ENCODE measurements at regions of chrX and their contacts with region 1.

Region 1: GRCh38 chrX:54044126-54044876 is at the start of gene PHF8:
- DNase-seq: peak; percentile 96
- ATAC-seq: peak; percentile 80
- H3K4me3 ChIP-seq: peak within 1 kb of the TSS; percentile 68 to 86 (median 75)
- H3K4me3 Mint-ChIP-seq: peak within 1 kb of the TSS; percentile 97
- H3K27ac ChIP-seq: peak within 1 kb of the TSS; percentile 84 to 87
- H3K27ac Mint-ChIP-seq: peak within 1 kb of the TSS; percentile 95
- H3K4me1 ChIP-seq: peaks cover 9 to 13% of the 10 kb centered on the region in 2 donors
- H3K4me1 Mint-ChIP-seq: peaks cover 17% of the 10 kb centered on the region
- H3K27me3 ChIP-seq: no peaks in the 10 kb centered on the region
- H3K27me3 Mint-ChIP-seq: no peaks in the 10 kb centered on the region
- CTCF ChIP-seq: no peak
- total RNA-seq, gene PHF8: 73.2 and 79.3 TPM in 2 replicates

Region 2: GRCh38 chrX:53093748-53094583 is 950.3 kb before region 1 on chrX and contains the start of gene KANTR:
- CTCF ChIA-PET with region 1: no interaction called
- POLR2A ChIA-PET with region 1: no interaction called
- intact Hi-C with region 1: loop called (anchors 10 kb)
- DNase-seq: peak; percentile 88
- ATAC-seq: peak; percentile 82
- H3K4me3 ChIP-seq: peak within 1 kb of the TSS; percentile 51 to 72 (median 68)
- H3K4me3 Mint-ChIP-seq: peak within 1 kb of the TSS; percentile 91
- H3K27ac ChIP-seq: peak within 1 kb of the TSS; percentile 49 to 59
- H3K27ac Mint-ChIP-seq: peak within 1 kb of the TSS; percentile 91
- H3K4me1 ChIP-seq: peaks cover 6 to 15% of the 10 kb centered on the region in 2 donors
- H3K4me1 Mint-ChIP-seq: peaks cover 16% of the 10 kb centered on the region
- H3K27me3 ChIP-seq: no peaks in the 10 kb centered on the region
- H3K27me3 Mint-ChIP-seq: no peaks in the 10 kb centered on the region
- CTCF ChIP-seq: no peak
- total RNA-seq, gene KANTR: 26.8 and 32.6 TPM in 2 replicates

Region 3: GRCh38 chrX:53683556-53684414 is 360.5 kb before region 1 on chrX:
- CTCF ChIA-PET with region 1: interaction called, 7 read pairs
- POLR2A ChIA-PET with region 1: interaction called, 11 read pairs
- intact Hi-C with region 1: no loop called
- DNase-seq: peak; percentile 96
- ATAC-seq: peak; percentile 70
- H3K4me3 ChIP-seq: peak overlapping the region; percentile 65 to 77 (median 69)
- H3K4me3 Mint-ChIP-seq: peak overlapping the region; percentile 94
- H3K27ac ChIP-seq: peak overlapping the region; percentile 95 to 98
- H3K27ac Mint-ChIP-seq: peak overlapping the region; percentile 99
- H3K4me1 ChIP-seq: peaks cover 21 to 26% of the 10 kb centered on the region in 2 donors
- H3K4me1 Mint-ChIP-seq: peaks cover 39% of the 10 kb centered on the region
- H3K27me3 ChIP-seq: no peaks in the 10 kb centered on the region
- H3K27me3 Mint-ChIP-seq: no peaks in the 10 kb centered on the region
- CTCF ChIP-seq: no peak

Region 4: DNA sequence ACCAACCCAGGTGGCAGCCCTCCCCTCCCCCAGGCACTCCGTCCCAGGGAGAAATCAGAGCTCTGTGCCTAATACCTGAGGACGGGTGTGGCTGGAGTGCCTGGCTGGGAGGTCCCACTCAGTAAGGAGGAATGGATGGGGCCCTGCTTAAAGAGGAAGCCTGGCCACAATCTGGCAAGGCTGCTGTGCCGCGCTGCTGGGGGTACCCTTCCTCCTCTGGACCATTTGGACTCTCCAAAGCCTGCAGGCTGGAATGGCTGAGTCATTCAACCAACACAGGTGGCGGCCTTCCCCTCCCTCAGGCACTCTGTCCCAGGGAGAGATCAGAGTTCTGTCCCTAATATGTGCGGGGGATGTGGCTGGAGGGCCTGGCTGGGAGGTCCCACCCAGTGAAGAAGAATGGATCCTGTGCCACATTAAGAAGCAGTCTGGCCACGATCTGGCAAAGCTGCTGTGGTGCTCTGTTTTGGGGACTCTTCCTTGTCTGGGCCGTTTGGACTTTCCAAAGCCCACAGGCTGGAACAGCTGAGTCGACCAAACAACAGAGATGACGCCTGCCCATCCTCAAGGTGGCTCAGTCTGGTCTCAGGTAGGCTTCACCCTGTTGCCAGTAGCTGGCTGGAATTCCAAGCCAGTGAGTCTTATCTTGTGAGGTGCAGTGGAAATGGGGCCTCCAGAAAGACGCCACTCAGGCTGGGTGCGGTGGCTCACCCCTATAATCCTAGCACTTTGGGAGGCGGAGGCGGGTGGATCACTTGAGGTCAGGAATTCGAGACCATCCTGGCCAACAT is 230.5 kb before region 1 on chrX:
- CTCF ChIA-PET with region 1: no interaction called
- POLR2A ChIA-PET with region 1: no interaction called
- intact Hi-C with region 1: no loop called
- DNase-seq: no peak
- ATAC-seq: no peak
- H3K4me3 ChIP-seq: no peak overlapping the region
- H3K4me3 Mint-ChIP-seq: no peak overlapping the region
- H3K27ac ChIP-seq: no peak overlapping the region
- H3K27ac Mint-ChIP-seq: no peak overlapping the region
- H3K4me1 ChIP-seq: no peaks in the 10 kb centered on the region
- H3K4me1 Mint-ChIP-seq: no peaks in the 10 kb centered on the region
- H3K27me3 ChIP-seq: no peaks in the 10 kb centered on the region
- H3K27me3 Mint-ChIP-seq: no peaks in the 10 kb centered on the region
- CTCF ChIP-seq: no peak

Region 5: DNA sequence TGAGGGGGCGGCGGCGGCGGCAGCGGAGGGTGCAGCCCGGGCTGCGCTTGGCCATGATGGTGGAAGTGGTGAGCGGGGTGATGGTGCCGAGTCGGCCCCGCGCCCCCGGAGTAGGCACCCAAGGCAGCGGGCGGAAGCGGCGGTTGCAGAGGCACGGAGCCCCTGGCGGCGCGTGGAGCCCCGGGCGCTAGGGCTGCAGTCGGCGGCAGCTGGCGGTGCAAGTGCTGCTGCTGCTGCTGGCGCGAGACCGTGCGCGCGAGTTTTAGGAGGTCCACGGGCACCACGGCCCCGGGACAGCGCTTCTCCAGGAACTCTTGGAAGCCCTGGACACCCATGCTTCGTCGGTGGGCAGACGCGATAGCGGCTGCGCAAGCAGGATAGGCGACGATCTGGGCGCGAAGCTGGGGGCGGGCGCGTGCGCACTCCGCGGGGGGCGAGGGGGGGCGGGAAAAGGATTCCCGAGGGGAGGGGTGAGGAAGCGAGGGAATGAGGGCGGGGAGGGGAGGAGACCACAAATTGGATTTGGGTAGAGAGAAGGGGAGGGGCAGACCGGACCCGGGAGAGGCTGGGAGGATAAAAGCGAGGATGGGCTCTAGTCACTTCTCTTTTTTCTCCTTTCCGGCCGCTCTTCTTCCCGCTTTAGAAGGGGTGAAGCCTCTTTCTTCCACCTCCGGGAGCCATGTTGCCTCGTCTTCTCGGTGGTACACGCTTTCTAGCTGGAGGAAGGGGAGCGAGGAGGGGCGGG is 138.7 kb after region 1 on chrX and contains the start of gene FAM120C:
- CTCF ChIA-PET with region 1: no interaction called
- POLR2A ChIA-PET with region 1: interaction called, 15 read pairs
- intact Hi-C with region 1: loop called (anchors 1 kb)
- DNase-seq: peak; percentile 78
- ATAC-seq: peak; percentile 76
- H3K4me3 ChIP-seq: peak within 1 kb of the TSS in 4 of 5 experiments; percentile 61 to 74 (median 66)
- H3K4me3 Mint-ChIP-seq: peak within 1 kb of the TSS; percentile 89
- H3K27ac ChIP-seq: peak within 1 kb of the TSS; percentile 48 to 63
- H3K27ac Mint-ChIP-seq: peak within 1 kb of the TSS; percentile 88
- H3K4me1 ChIP-seq: peaks cover 20 to 24% of the 10 kb centered on the region in 2 donors
- H3K4me1 Mint-ChIP-seq: peaks cover 42% of the 10 kb centered on the region
- H3K27me3 ChIP-seq: no peaks in the 10 kb centered on the region
- H3K27me3 Mint-ChIP-seq: no peaks in the 10 kb centered on the region
- CTCF ChIP-seq: no peak
- total RNA-seq, gene FAM120C: 22.2 and 23.3 TPM in 2 replicates

Region 6: GRCh38 chrX:54288277-54288676 is 244.0 kb after region 1 on chrX:
- CTCF ChIA-PET with region 1: no interaction called
- POLR2A ChIA-PET with region 1: no interaction called
- intact Hi-C with region 1: no loop called
- DNase-seq: no peak
- ATAC-seq: no peak
- H3K4me3 ChIP-seq: no peak overlapping the region
- H3K4me3 Mint-ChIP-seq: no peak overlapping the region
- H3K27ac ChIP-seq: no peak overlapping the region
- H3K27ac Mint-ChIP-seq: no peak overlapping the region
- H3K4me1 ChIP-seq: no peaks in the 10 kb centered on the region
- H3K4me1 Mint-ChIP-seq: no peaks in the 10 kb centered on the region
- H3K27me3 ChIP-seq: no peaks in the 10 kb centered on the region
- H3K27me3 Mint-ChIP-seq: no peaks in the 10 kb centered on the region
- CTCF ChIP-seq: no peak

Region 7: GRCh38 chrX:54439967-54440871 is 395.9 kb after region 1 on chrX and contains the start of gene TSR2:
- CTCF ChIA-PET with region 1: interaction called, 4 read pairs
- POLR2A ChIA-PET with region 1: no interaction called
- intact Hi-C with region 1: loop called (anchors 2 kb)
- DNase-seq: peak; percentile 81
- ATAC-seq: peak; percentile 99
- H3K4me3 ChIP-seq: peak within 1 kb of the TSS; percentile 70 to 92 (median 84)
- H3K4me3 Mint-ChIP-seq: peak within 1 kb of the TSS; percentile 94
- H3K27ac ChIP-seq: peak within 1 kb of the TSS; percentile 50 to 70
- H3K27ac Mint-ChIP-seq: peak within 1 kb of the TSS; percentile 89
- H3K4me1 ChIP-seq: peaks cover 14 to 19% of the 10 kb centered on the region in 2 donors
- H3K4me1 Mint-ChIP-seq: peaks cover 25% of the 10 kb centered on the region
- H3K27me3 ChIP-seq: no peaks in the 10 kb centered on the region
- H3K27me3 Mint-ChIP-seq: no peaks in the 10 kb centered on the region
- CTCF ChIP-seq: no peak
- total RNA-seq, gene TSR2: 38.3 and 41.4 TPM in 2 replicates

Measured in B cell (primary cell).